GM12878 (cell line): ENCODE measurements at regions of chr11 and their contacts with region 1.

Region 1: DNA sequence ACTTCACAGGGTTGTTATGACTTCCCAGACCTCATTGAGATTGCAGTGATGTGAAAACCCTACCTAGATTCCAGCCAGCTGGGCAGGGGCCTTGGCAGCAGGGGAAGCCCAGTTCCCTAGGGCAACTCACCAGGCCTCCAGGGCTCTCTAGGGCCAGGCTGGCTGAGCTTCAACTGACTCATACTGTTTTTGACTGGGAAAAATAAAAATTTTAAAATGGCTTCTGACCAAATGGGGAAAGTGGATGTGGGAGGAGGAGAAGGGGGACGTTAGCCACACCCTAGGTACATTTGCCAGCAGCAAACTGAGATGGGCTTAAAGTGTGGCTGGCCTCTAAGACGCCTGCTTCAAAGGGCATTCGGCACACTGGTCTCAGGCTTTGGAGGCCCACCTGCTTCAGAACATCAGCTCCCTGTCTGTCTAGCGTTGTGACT is 39.0 kb downstream of the BMAL1 start:
- DNase-seq: no peak
- ATAC-seq: peak; percentile 84
- H3K4me3 ChIP-seq: no peak overlapping the region
- H3K27ac ChIP-seq: no peak overlapping the region
- H3K4me1 ChIP-seq: peaks cover 21% of the 10 kb centered on the region
- H3K27me3 ChIP-seq: no peaks in the 10 kb centered on the region
- CTCF ChIP-seq: no peak
- EP300 ChIP-seq: 0 out of 4 replicates have a peak, but pooled peaks of 1 of the 2 experiments have one; percentile 22
- POLR2A ChIP-seq: no peak
- RAD21 ChIP-seq: no peak

Region 2: GRCh38 chr11:13276832-13277767 is 39.4 kb before region 1 on chr11:
- CTCF ChIA-PET with region 1: interaction called, 8 read pairs
- POLR2A ChIA-PET with region 1: interaction called, 28 read pairs
- RAD21 ChIA-PET with region 1: interaction called, 12 read pairs
- SMC1A ChIA-PET with region 1: interaction called, 53 read pairs
- in situ Hi-C with region 1: no loop called
- intact Hi-C with region 1: loop called (anchors 2 kb)
- DNase-seq: peak; percentile 85
- ATAC-seq: peak; percentile 89
- H3K4me3 ChIP-seq: peak overlapping the region; percentile 74
- H3K27ac ChIP-seq: no peak overlapping the region
- H3K4me1 ChIP-seq: peaks cover 2% of the 10 kb centered on the region; the same call in 1 of the 2 replicates
- H3K27me3 ChIP-seq: peaks cover 0 to 6% of the 10 kb centered on the region in 2 experiments; a peak in 1 of 4 replicates
- CTCF ChIP-seq: no peak
- EP300 ChIP-seq: no peak
- POLR2A ChIP-seq: peak; percentile 58; the same call in 1 of the 2 replicates
- RAD21 ChIP-seq: no peak

Region 3: DNA sequence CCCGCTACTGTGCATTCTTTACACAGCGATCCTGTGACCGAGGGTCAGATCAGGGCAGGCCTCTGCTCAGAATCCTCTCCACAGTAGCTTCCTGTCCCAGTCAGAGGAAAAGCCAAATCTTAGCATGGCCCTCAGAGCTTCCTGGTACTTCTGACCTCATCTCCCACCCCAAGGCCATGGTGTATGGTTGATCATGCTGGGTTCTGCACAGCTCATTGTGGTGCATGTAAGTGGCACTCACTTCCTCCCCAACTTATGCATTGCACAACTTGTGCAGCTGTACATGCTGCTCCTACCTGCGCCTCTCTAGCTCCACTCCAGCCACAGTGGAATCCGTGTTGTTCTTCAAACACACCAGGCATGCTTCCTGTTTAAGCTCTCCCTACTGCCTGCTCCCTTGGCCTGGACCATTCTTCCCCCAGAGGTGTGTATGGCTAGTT is 18.6 kb before region 1 on chr11:
- CTCF ChIA-PET with region 1: interaction called, 13 read pairs
- POLR2A ChIA-PET with region 1: interaction called, 12 read pairs
- RAD21 ChIA-PET with region 1: interaction called, 7 read pairs
- SMC1A ChIA-PET with region 1: interaction called, 23 read pairs
- in situ Hi-C with region 1: no loop called
- intact Hi-C with region 1: no loop called
- DNase-seq: no peak
- ATAC-seq: no peak; the same call in 1 of the 3 replicates
- H3K4me3 ChIP-seq: no peak overlapping the region
- H3K27ac ChIP-seq: no peak overlapping the region
- H3K4me1 ChIP-seq: peaks cover 8% of the 10 kb centered on the region
- H3K27me3 ChIP-seq: no peaks in the 10 kb centered on the region
- CTCF ChIP-seq: no peak
- EP300 ChIP-seq: no peak
- POLR2A ChIP-seq: no peak
- RAD21 ChIP-seq: no peak

Region 4: DNA sequence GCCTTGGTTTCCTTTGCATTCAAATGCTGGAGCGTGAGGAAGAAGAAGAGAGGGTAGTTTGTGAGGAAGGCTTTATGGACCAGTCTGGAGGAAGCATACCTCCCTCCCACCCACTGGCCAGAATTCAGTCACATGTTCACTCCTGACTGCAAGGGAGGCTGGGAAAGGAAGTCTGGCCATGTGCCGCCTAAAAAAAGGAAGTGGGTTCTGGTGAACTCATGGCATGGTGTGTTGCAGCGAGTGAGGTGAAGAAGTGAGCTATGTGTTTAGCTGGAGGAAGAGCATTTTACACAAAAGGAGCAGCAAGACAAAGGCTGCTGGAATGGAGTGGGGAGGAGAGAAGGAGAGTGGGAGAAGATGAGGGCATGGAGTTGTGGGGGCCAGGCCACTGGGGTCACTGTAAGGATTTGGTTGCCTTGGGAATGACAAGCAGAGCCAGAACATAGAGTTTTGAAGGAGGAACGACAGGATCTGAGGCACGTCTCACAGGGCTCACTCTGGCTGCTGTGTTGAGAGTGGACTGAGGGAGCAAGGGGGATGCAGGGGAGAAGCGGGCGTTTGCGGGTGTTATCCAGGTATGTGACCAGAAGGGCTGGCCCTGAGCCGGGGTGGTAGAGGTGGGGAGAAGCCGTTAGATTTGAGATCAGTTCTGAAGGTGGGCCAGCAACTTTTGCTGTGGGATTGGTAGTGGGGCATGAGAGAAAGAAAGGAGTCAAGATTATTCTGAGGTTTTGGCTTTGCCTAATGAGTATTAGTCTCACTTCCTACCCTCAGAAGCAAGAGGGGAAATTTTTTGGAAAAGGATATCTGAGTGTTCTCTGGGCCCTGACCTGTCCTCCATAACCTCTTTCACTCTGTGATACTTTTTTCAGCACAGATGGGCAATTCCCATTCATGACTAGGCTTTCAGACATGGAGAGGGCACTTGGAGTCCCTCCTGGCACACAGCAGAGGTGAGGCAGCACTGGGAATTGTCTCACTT is 12.6 kb before region 1 on chr11:
- CTCF ChIA-PET with region 1: interaction called, 13 read pairs
- POLR2A ChIA-PET with region 1: interaction called, 7 read pairs
- RAD21 ChIA-PET with region 1: interaction called, 6 read pairs
- SMC1A ChIA-PET with region 1: interaction called, 23 read pairs
- in situ Hi-C with region 1: no loop called
- intact Hi-C with region 1: no loop called
- DNase-seq: no peak
- ATAC-seq: peak; percentile 78
- H3K4me3 ChIP-seq: no peak overlapping the region
- H3K27ac ChIP-seq: no peak overlapping the region; the same call in 1 of the 2 replicates
- H3K4me1 ChIP-seq: peaks cover 16% of the 10 kb centered on the region
- H3K27me3 ChIP-seq: no peaks in the 10 kb centered on the region
- CTCF ChIP-seq: no peak
- EP300 ChIP-seq: no peak
- POLR2A ChIP-seq: no peak
- RAD21 ChIP-seq: no peak